GM12878 (cell line): ENCODE measurements at regions of chr2 and their contacts with region 1.

Region 1: DNA sequence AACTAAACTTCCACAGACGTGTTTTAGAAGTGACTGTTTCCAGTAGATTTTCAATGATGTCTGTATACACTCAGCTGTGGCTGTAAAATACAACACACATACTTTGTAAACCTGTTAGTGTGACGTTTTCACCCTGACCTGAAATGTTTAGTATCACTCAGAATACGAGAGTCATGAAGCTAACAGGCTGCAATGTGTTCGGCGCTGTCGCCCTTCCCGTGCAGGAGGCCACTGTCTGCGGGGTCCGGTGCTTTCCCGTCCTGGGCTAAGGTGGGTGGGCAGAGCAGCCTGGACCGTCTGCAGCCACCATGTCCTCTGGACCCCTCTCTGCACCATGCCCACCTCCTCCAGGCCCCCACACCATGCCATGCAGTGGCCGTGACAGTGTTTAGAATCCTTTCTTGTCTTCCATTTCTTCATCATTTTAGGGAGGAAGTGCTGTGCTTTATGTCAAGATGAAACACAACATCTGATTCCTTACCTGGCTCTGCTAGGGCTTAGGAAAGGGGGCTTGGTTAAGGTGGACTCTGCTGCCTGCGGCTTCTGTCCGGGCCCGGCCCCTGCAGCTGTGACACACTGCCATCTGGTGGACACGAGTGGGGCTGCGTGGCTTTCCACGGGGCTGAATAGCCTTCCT is 53.8 kb upstream of the RBM44 start:
- DNase-seq: no peak
- ATAC-seq: peak; percentile 97
- H3K4me3 ChIP-seq: no peak overlapping the region
- H3K27ac ChIP-seq: no peak overlapping the region
- H3K4me1 ChIP-seq: no peaks in the 10 kb centered on the region
- H3K27me3 ChIP-seq: no peaks in the 10 kb centered on the region
- CTCF ChIP-seq: peak; percentile 93 to 97 (median 95)
- EP300 ChIP-seq: no peak
- POLR2A ChIP-seq: peak; percentile 53
- RAD21 ChIP-seq: peak; percentile 93

Region 2: GRCh38 chr2:237581751-237582746 is 162.7 kb before region 1 on chr2:
- CTCF ChIA-PET with region 1: interaction called, 21 read pairs
- POLR2A ChIA-PET with region 1: no interaction called
- RAD21 ChIA-PET with region 1: interaction called, 18 read pairs
- SMC1A ChIA-PET with region 1: interaction called, 8 read pairs
- in situ Hi-C with region 1: loop called (anchors 10 kb)
- intact Hi-C with region 1: loop called (anchors 1 kb)
- DNase-seq: peak; percentile 35
- ATAC-seq: peak; percentile 90
- H3K4me3 ChIP-seq: no peak overlapping the region
- H3K27ac ChIP-seq: no peak overlapping the region
- H3K4me1 ChIP-seq: no peaks in the 10 kb centered on the region
- H3K27me3 ChIP-seq: no peaks in the 10 kb centered on the region; a peak in 1 of 4 replicates
- CTCF ChIP-seq: peak; percentile 38 to 73 (median 53); a peak in 5 of 6 replicates
- EP300 ChIP-seq: no peak
- POLR2A ChIP-seq: no peak
- RAD21 ChIP-seq: peak; percentile 72

Region 3: GRCh38 chr2:237624565-237624964 is 120.2 kb before region 1 on chr2:
- CTCF ChIA-PET with region 1: interaction called, 3 read pairs
- POLR2A ChIA-PET with region 1: no interaction called
- RAD21 ChIA-PET with region 1: no interaction called
- SMC1A ChIA-PET with region 1: interaction called, 4 read pairs
- in situ Hi-C with region 1: no loop called
- intact Hi-C with region 1: loop called (anchors 5 kb)
- DNase-seq: no peak
- ATAC-seq: peak; percentile 56
- H3K4me3 ChIP-seq: no peak overlapping the region
- H3K27ac ChIP-seq: no peak overlapping the region
- H3K4me1 ChIP-seq: no peaks in the 10 kb centered on the region
- H3K27me3 ChIP-seq: peaks cover 7 to 12% of the 10 kb centered on the region in 2 experiments; a peak in 3 of 4 replicates
- CTCF ChIP-seq: peak in 2 of 3 experiments; percentile 23 to 35; a peak in 3 of 6 replicates
- EP300 ChIP-seq: no peak
- POLR2A ChIP-seq: no peak
- RAD21 ChIP-seq: peak; percentile 43

Region 4: DNA sequence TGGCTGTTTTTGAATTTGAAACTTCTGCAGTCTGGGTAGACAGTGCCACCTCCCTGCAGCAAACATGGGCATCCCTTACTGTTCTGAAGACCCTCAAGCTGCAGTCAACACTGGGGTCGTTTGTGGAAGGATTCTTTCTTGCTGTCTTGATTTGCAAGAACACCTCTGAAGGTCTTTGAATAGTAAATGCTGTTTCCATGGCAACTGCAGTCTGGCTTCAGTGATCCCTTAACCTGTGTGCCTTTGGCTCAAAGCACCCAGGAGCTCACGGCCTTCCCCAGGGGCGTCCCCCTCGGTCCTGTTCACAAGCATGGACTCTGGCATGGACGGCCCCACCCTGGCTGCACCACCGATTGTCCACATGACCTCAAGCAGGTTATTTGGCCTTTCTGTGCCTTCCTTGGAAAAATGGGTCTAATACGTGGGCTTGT is 79.0 kb before region 1 on chr2:
- CTCF ChIA-PET with region 1: interaction called, 209 read pairs
- POLR2A ChIA-PET with region 1: interaction called, 3 read pairs
- RAD21 ChIA-PET with region 1: interaction called, 114 read pairs
- SMC1A ChIA-PET with region 1: interaction called, 151 read pairs
- in situ Hi-C with region 1: loop called (anchors 5 kb)
- intact Hi-C with region 1: no loop called
- DNase-seq: no peak
- ATAC-seq: peak; percentile 60
- H3K4me3 ChIP-seq: no peak overlapping the region
- H3K27ac ChIP-seq: no peak overlapping the region
- H3K4me1 ChIP-seq: peaks cover 18% of the 10 kb centered on the region
- H3K27me3 ChIP-seq: peaks cover 0 to 8% of the 10 kb centered on the region in 2 experiments; a peak in 2 of 4 replicates
- CTCF ChIP-seq: peak in 1 of 3 experiments; percentile 29; a peak in 1 of 6 replicates
- EP300 ChIP-seq: no peak
- POLR2A ChIP-seq: no peak
- RAD21 ChIP-seq: no peak

Region 5: GRCh38 chr2:237691908-237692600 is 52.7 kb before region 1 on chr2:
- CTCF ChIA-PET with region 1: interaction called, 88 read pairs
- POLR2A ChIA-PET with region 1: interaction called, 4 read pairs
- RAD21 ChIA-PET with region 1: interaction called, 11 read pairs
- SMC1A ChIA-PET with region 1: interaction called, 14 read pairs
- in situ Hi-C with region 1: no loop called
- intact Hi-C with region 1: no loop called
- DNase-seq: no peak
- ATAC-seq: peak; percentile 75
- H3K4me3 ChIP-seq: peak overlapping the region; percentile 90
- H3K27ac ChIP-seq: peak overlapping the region; percentile 90
- H3K4me1 ChIP-seq: peaks cover 15% of the 10 kb centered on the region
- H3K27me3 ChIP-seq: no peaks in the 10 kb centered on the region
- CTCF ChIP-seq: no peak
- EP300 ChIP-seq: no peak; a peak in 1 of 4 replicates
- POLR2A ChIP-seq: peak; percentile 71
- RAD21 ChIP-seq: no peak

Region 6: GRCh38 chr2:237700512-237701032 is 44.2 kb before region 1 on chr2:
- CTCF ChIA-PET with region 1: interaction called, 88 read pairs
- POLR2A ChIA-PET with region 1: no interaction called
- RAD21 ChIA-PET with region 1: interaction called, 11 read pairs
- SMC1A ChIA-PET with region 1: interaction called, 9 read pairs
- in situ Hi-C with region 1: no loop called
- intact Hi-C with region 1: no loop called
- DNase-seq: peak; percentile 54
- ATAC-seq: peak; percentile 68
- H3K4me3 ChIP-seq: peak overlapping the region; percentile 56
- H3K27ac ChIP-seq: peak overlapping the region; percentile 77
- H3K4me1 ChIP-seq: peaks cover 70% of the 10 kb centered on the region
- H3K27me3 ChIP-seq: no peaks in the 10 kb centered on the region
- CTCF ChIP-seq: no peak
- EP300 ChIP-seq: peak in 1 of 2 experiments; percentile 15; a peak in 1 of 4 replicates
- POLR2A ChIP-seq: peak; percentile 36
- RAD21 ChIP-seq: no peak

Region 7: GRCh38 chr2:237726401-237726830 is 18.3 kb before region 1 on chr2:
- CTCF ChIA-PET with region 1: interaction called, 11 read pairs
- POLR2A ChIA-PET with region 1: no interaction called
- RAD21 ChIA-PET with region 1: interaction called, 3 read pairs
- SMC1A ChIA-PET with region 1: interaction called, 3 read pairs
- in situ Hi-C with region 1: no loop called
- intact Hi-C with region 1: no loop called
- DNase-seq: no peak
- ATAC-seq: no peak
- H3K4me3 ChIP-seq: no peak overlapping the region
- H3K27ac ChIP-seq: no peak overlapping the region
- H3K4me1 ChIP-seq: no peaks in the 10 kb centered on the region
- H3K27me3 ChIP-seq: no peaks in the 10 kb centered on the region
- CTCF ChIP-seq: no peak
- EP300 ChIP-seq: no peak
- POLR2A ChIP-seq: no peak
- RAD21 ChIP-seq: no peak

Region 8: GRCh38 chr2:237932731-237933131 is 188.0 kb after region 1 on chr2:
- CTCF ChIA-PET with region 1: no interaction called
- POLR2A ChIA-PET with region 1: no interaction called
- RAD21 ChIA-PET with region 1: no interaction called
- SMC1A ChIA-PET with region 1: no interaction called
- in situ Hi-C with region 1: no loop called
- intact Hi-C with region 1: no loop called
- DNase-seq: no peak
- ATAC-seq: peak; percentile 69
- H3K4me3 ChIP-seq: no peak overlapping the region
- H3K27ac ChIP-seq: no peak overlapping the region
- H3K4me1 ChIP-seq: peaks cover 4% of the 10 kb centered on the region; the same call in 1 of the 2 replicates
- H3K27me3 ChIP-seq: no peaks in the 10 kb centered on the region
- CTCF ChIP-seq: no peak
- EP300 ChIP-seq: no peak
- POLR2A ChIP-seq: no peak
- RAD21 ChIP-seq: no peak